Spleen (tissue), 13 donors: ENCODE measurements at regions of chr5 and their contacts with region 1.

Region 1: DNA sequence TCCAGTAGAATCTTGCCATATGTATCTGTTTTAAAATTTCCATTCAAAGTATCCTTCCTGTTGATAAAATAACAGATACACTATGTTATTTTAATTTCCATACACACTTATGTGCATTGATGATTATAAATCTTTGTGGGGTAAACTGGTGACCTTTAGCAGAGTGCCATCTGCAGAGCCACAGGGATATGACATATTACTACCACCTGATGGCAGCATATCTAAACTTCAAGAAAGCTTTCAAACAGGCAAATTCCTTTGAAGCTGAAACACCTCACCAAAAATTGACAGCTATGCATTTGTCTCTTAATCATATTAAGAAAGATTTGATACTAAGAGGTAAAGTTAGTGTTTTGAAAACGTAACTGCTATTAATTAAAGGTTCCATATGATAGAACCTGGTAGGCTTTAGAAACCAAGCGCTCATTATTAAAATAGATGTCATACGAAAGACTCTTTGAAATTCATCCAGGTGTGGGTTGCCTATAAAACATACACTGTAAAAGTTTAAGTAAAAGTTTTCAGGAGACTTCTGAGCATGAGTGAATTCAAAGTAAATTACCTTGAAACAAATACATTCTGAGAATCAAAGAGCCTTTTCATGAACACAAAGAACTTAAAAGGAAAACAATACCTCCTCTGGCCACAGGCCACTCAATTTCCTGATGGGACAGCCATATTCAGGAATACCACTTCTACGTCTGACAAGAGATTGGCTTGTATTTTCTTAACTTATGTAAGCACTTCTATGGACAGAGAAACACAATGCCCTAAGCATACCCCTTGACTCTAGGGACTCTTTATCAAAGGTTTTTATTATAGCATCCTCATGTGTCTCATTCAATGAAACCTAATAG is 93.3 kb downstream of the KIAA0825 start:
- DNase-seq: no peak
- H3K4me3 ChIP-seq: no peak overlapping the region
- H3K27ac ChIP-seq: no peak overlapping the region
- H3K4me1 ChIP-seq: peaks cover 0 to 7% (median 0%) of the 10 kb centered on the region in 6 donors
- H3K27me3 ChIP-seq: no peaks in the 10 kb centered on the region
- CTCF ChIP-seq: peak; percentile 7 to 77 (median 59)
- POLR2A ChIP-seq: no peak

Region 2: GRCh38 chr5:94693043-94693822 is 168.2 kb after region 1 on chr5:
- intact Hi-C with region 1: loop called (anchors 10 kb)
- DNase-seq: no peak
- H3K4me3 ChIP-seq: no peak overlapping the region
- H3K27ac ChIP-seq: no peak overlapping the region
- H3K4me1 ChIP-seq: peaks cover 0 to 17% (median 5%) of the 10 kb centered on the region in 6 donors
- H3K27me3 ChIP-seq: no peaks in the 10 kb centered on the region
- CTCF ChIP-seq: peak in 8 of 11 experiments; percentile 27 to 58 (median 44)
- POLR2A ChIP-seq: no peak

Region 3: GRCh38 chr5:94736498-94736897 is 211.4 kb after region 1 on chr5:
- intact Hi-C with region 1: loop called (anchors 5 kb)
- DNase-seq: no peak
- H3K4me3 ChIP-seq: no peak overlapping the region
- H3K27ac ChIP-seq: no peak overlapping the region
- H3K4me1 ChIP-seq: peaks cover 0 to 6% (median 0%) of the 10 kb centered on the region in 6 donors
- H3K27me3 ChIP-seq: no peaks in the 10 kb centered on the region
- CTCF ChIP-seq: no peak
- POLR2A ChIP-seq: no peak

Region 4: GRCh38 chr5:95331358-95331757 is 806.3 kb after region 1 on chr5:
- intact Hi-C with region 1: no loop called
- DNase-seq: no peak
- H3K4me3 ChIP-seq: no peak overlapping the region
- H3K27ac ChIP-seq: no peak overlapping the region
- H3K4me1 ChIP-seq: no peaks in the 10 kb centered on the region
- H3K27me3 ChIP-seq: no peaks in the 10 kb centered on the region
- CTCF ChIP-seq: no peak
- POLR2A ChIP-seq: no peak